B cell (primary cell): ENCODE measurements at regions of chr10 and their contacts with region 1.

Region 1: DNA sequence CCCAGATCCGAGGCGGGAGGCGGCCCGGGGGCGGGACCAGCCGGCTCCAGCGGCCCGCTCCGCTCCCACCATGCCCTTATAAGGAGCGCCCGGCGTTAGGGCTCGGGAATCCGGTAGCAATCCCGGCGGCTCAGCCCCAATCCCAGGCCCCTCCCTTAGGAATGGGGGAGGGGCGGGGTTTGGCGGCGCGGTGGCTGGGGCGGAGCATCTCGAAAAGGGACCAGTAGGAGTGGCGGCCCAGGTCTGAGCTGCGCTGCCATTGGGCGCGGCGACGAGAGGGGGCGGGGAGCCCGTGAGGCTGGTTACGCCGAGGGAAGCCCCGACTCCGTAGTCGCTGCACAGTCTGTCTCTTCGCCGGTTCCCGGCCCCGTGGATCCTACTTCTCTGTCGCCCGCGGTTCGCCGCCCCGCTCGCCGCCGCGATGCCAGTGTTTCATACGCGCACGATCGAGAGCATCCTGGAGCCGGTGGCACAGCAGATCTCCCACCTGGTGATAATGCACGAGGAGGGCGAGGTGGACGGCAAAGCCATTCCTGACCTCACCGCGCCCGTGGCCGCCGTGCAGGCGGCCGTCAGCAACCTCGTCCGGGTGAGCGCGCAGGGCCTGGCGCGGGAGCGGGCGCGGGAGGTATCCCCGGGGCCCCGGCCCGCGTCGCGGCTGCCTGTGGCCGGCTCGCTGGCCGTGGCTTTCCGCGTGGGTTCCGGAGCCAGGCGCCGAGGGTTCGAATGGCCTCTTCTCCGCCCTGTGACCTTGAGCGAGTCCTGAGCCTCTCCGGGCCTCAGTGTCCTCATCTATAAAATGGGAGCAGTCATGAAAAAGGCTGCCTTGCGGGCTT is at the start of gene VCL:
- DNase-seq: peak; percentile 97
- ATAC-seq: peak; percentile 97
- H3K4me3 ChIP-seq: peak within 1 kb of the TSS; percentile 77 to 96 (median 93)
- H3K4me3 Mint-ChIP-seq: peak within 1 kb of the TSS; percentile 99
- H3K27ac ChIP-seq: peak within 1 kb of the TSS; percentile 61 to 89
- H3K27ac Mint-ChIP-seq: peak within 1 kb of the TSS; percentile 96
- H3K4me1 ChIP-seq: peaks cover 20 to 26% of the 10 kb centered on the region in 2 donors
- H3K4me1 Mint-ChIP-seq: peaks cover 45% of the 10 kb centered on the region
- H3K27me3 ChIP-seq: no peaks in the 10 kb centered on the region
- H3K27me3 Mint-ChIP-seq: no peaks in the 10 kb centered on the region
- CTCF ChIP-seq: no peak
- total RNA-seq, gene VCL: 29.8 and 37.0 TPM in 2 replicates

Region 2: GRCh38 chr10:73772280-73773151 is 225.5 kb before region 1 on chr10:
- CTCF ChIA-PET with region 1: no interaction called
- POLR2A ChIA-PET with region 1: no interaction called
- intact Hi-C with region 1: loop called (anchors 5 kb)
- DNase-seq: peak; percentile 91
- ATAC-seq: peak; percentile 66
- H3K4me3 ChIP-seq: peak overlapping the region; percentile 66 to 94 (median 89)
- H3K4me3 Mint-ChIP-seq: peak overlapping the region; percentile 97
- H3K27ac ChIP-seq: peak overlapping the region; percentile 85 to 93
- H3K27ac Mint-ChIP-seq: peak overlapping the region; percentile 98
- H3K4me1 ChIP-seq: peaks cover 30 to 47% of the 10 kb centered on the region in 2 donors
- H3K4me1 Mint-ChIP-seq: peaks cover 63% of the 10 kb centered on the region
- H3K27me3 ChIP-seq: no peaks in the 10 kb centered on the region
- H3K27me3 Mint-ChIP-seq: no peaks in the 10 kb centered on the region
- CTCF ChIP-seq: no peak

Region 3: GRCh38 chr10:74012480-74012879 is 14.5 kb after region 1 on chr10:
- CTCF ChIA-PET with region 1: no interaction called
- POLR2A ChIA-PET with region 1: no interaction called
- intact Hi-C with region 1: no loop called
- DNase-seq: no peak
- ATAC-seq: no peak
- H3K4me3 ChIP-seq: no peak overlapping the region
- H3K4me3 Mint-ChIP-seq: no peak overlapping the region
- H3K27ac ChIP-seq: no peak overlapping the region
- H3K27ac Mint-ChIP-seq: no peak overlapping the region
- H3K4me1 ChIP-seq: peaks cover 32 to 34% of the 10 kb centered on the region in 2 donors
- H3K4me1 Mint-ChIP-seq: peaks cover 52% of the 10 kb centered on the region
- H3K27me3 ChIP-seq: no peaks in the 10 kb centered on the region
- H3K27me3 Mint-ChIP-seq: no peaks in the 10 kb centered on the region
- CTCF ChIP-seq: no peak